ENCODE measurements at regions of chr7 and their contacts with region 1.

Region 1: GRCh38 chr7:100889761-100890634 is 483 bp upstream of the UFSP1 start:
- DNase-seq: peak; percentile 90 to 94 (median 91)
- H3K4me3 ChIP-seq: peak overlapping the region; percentile 74
- H3K4me3 Mint-ChIP-seq: peak overlapping the region; percentile 86 to 96 (median 89)
- H3K27ac ChIP-seq: peak overlapping the region; percentile 43
- H3K27ac Mint-ChIP-seq: peak overlapping the region; percentile 26 to 89 (median 69)
- H3K4me1 ChIP-seq: peaks cover 52% of the 10 kb centered on the region
- H3K4me1 Mint-ChIP-seq: peaks cover 36 to 54% (median 54%) of the 10 kb centered on the region in 3 donors
- H3K27me3 ChIP-seq: peaks cover 1% of the 10 kb centered on the region
- H3K27me3 Mint-ChIP-seq: peaks cover 16 to 26% of the 10 kb centered on the region in 2 donors

Region 2: GRCh38 chr7:100852048-100852872 is 37.7 kb before region 1 on chr7 and contains the start of gene SLC12A9:
- CTCF ChIA-PET with region 1: interaction called, 7 read pairs
- POLR2A ChIA-PET with region 1: interaction called, 12 read pairs
- DNase-seq: peak; percentile 81 to 89 (median 84)
- H3K4me3 ChIP-seq: peak within 1 kb of the TSS; percentile 85
- H3K4me3 Mint-ChIP-seq: peak within 1 kb of the TSS; percentile 84 to 96 (median 90)
- H3K27ac ChIP-seq: peak within 1 kb of the TSS; percentile 64
- H3K27ac Mint-ChIP-seq: peak within 1 kb of the TSS; percentile 36 to 98 (median 90)
- H3K4me1 ChIP-seq: peaks cover 17% of the 10 kb centered on the region
- H3K4me1 Mint-ChIP-seq: peaks cover 15 to 33% (median 21%) of the 10 kb centered on the region in 3 donors
- H3K27me3 ChIP-seq: no peaks in the 10 kb centered on the region
- H3K27me3 Mint-ChIP-seq: no peaks in the 10 kb centered on the region
- total RNA-seq, gene SLC12A9: 24.7 to 29.1 TPM

Region 3: GRCh38 chr7:100874577-100875355 is 15.2 kb before region 1 on chr7 and contains the start of gene SRRT:
- CTCF ChIA-PET with region 1: interaction called, 48 read pairs
- POLR2A ChIA-PET with region 1: interaction called, 102 read pairs
- DNase-seq: peak; percentile 97 to 98 (median 98)
- H3K4me3 ChIP-seq: peak within 1 kb of the TSS; percentile 84
- H3K4me3 Mint-ChIP-seq: peak within 1 kb of the TSS; percentile 96 to 99 (median 99)
- H3K27ac ChIP-seq: peak within 1 kb of the TSS; percentile 86
- H3K27ac Mint-ChIP-seq: peak within 1 kb of the TSS; percentile 91 to 99 (median 98)
- H3K4me1 ChIP-seq: peaks cover 29% of the 10 kb centered on the region
- H3K4me1 Mint-ChIP-seq: peaks cover 44 to 53% (median 52%) of the 10 kb centered on the region in 3 donors
- H3K27me3 ChIP-seq: no peaks in the 10 kb centered on the region
- H3K27me3 Mint-ChIP-seq: no peaks in the 10 kb centered on the region
- total RNA-seq, gene SRRT: 285 to 290 TPM

Region 4: GRCh38 chr7:101058355-101058754 is 168.4 kb after region 1 on chr7:
- CTCF ChIA-PET with region 1: interaction called, 14 read pairs
- POLR2A ChIA-PET with region 1: no interaction called
- DNase-seq: peak; percentile 24 to 61 (median 40)
- H3K4me3 ChIP-seq: no peak overlapping the region
- H3K4me3 Mint-ChIP-seq: no peak overlapping the region
- H3K27ac ChIP-seq: no peak overlapping the region
- H3K27ac Mint-ChIP-seq: no peak overlapping the region
- H3K4me1 ChIP-seq: no peaks in the 10 kb centered on the region
- H3K4me1 Mint-ChIP-seq: peaks cover 0 to 4% (median 0%) of the 10 kb centered on the region in 3 donors
- H3K27me3 ChIP-seq: peaks cover 7% of the 10 kb centered on the region
- H3K27me3 Mint-ChIP-seq: peaks cover 22 to 51% of the 10 kb centered on the region in 2 donors